ENCODE measurements at regions of chr9 and their contacts with region 1.

Region 1: GRCh38 chr9:136283291-136284235 is 20.3 kb downstream of the CCDC187 start:
- H3K4me3 Mint-ChIP-seq: no peak overlapping the region
- H3K27ac Mint-ChIP-seq: no peak overlapping the region
- H3K4me1 Mint-ChIP-seq: peaks cover 6% of the 10 kb centered on the region
- H3K27me3 Mint-ChIP-seq: peaks cover 10% of the 10 kb centered on the region

Region 2: DNA sequence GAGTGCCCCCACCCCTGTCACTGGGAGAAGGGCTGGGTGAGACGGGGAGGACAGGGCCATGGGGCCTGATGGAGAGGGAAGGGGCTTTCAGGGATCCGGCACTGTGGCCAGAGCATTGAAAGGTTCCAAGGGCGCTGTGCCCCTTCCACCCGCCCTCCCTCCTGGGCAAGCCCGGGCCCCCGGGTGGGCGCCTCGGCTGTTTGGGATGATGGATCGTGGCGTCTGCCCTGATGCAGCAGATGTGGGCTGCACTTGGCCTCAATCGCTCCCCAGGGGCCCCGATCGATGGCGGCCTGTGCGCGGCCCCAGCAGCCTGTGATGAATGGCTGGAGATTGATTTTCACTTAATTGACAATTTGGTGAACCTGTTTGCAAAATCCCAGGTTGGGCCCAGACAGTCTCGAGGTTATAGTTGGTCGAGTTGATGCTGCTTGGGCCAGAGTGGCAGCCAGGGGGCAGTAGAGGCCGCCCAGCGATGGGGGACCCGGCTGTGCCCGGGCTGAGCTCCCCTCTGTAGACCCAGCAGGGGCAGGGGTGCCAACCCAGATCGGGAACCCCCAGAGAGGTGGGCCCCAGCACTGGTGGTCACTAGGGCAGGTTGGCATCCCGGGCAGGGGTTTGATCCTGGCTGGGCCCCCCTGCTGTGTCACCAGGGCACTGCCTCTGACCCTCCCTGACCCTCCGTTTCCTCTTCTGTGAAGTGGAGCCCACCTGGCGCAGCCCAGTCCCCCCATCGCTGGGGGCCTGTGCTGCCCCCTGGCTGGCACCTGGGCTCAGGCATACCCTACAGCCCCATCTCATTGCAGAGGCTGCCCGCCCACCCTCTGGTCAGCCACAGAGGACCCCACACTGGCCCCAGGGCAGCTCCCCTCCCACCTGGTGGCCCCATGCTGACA is 113.3 kb before region 1 on chr9:
- intact Hi-C with region 1: loop called (anchors 1 kb)
- H3K4me3 Mint-ChIP-seq: no peak overlapping the region
- H3K27ac Mint-ChIP-seq: no peak overlapping the region
- H3K4me1 Mint-ChIP-seq: no peaks in the 10 kb centered on the region
- H3K27me3 Mint-ChIP-seq: peaks cover 12% of the 10 kb centered on the region